ENCODE measurements at regions of chr17 and their contacts with region 1.

Region 1: DNA sequence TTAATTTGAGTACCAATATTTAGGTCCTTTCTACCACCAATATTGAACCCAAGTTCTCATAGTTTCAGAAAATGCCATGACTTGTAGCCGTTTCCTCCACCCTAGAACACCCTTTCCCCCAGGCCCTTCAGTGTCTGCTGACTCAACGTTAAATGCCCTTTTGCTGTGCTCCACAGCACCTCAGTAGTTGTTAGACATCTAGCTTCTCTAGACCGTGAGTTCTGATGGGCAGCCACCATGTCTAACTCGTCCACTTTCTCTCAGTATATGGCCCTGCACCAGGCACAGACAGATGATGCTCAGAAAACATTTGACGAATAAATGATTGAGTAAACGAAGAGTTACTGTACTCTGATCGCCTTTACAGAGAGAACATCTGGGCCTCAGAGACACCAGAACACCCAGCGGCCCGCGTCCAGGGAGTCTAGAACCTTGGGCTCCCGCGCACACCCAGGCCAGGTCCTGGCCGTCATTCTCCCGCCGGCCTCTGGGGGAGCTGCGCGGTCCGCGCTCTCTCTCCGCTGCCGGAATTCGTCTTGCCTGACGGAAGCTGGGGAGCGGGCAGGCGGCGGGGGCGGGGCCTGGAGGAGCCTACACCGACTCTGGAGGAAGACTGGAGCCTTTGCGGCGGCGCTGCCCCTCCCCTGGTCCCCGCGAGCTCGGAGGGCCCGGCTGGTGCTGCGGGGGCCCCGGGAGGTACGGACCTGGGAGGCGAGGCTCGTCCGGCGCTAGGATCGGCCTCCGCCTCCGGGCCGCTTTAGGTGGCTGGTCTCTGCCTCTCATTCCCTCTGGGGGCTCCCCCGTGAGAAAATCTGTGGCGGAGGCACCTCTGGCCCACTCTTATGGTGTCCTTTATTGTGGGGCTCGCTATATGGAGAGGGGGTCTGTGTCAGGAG is at the start of gene NKIRAS2:
- DNase-seq: peak; percentile 91 to 93
- ATAC-seq: peak; percentile 59 to 66
- H3K4me3 ChIP-seq: peak within 1 kb of the TSS; percentile 77 to 99 (median 96)
- H3K27ac ChIP-seq: peak within 1 kb of the TSS; percentile 90 to 96 (median 94)
- H3K4me1 ChIP-seq: peaks cover 50 to 51% of the 10 kb centered on the region in 2 donors
- H3K27me3 ChIP-seq: no peaks in the 10 kb centered on the region
- CTCF ChIP-seq: peak; percentile 91 to 98 (median 96)
- POLR2A ChIP-seq: peak; percentile 58 to 66
- total RNA-seq, gene NKIRAS2: 48.8 to 77.0 (median 63.4) TPM

Region 2: DNA sequence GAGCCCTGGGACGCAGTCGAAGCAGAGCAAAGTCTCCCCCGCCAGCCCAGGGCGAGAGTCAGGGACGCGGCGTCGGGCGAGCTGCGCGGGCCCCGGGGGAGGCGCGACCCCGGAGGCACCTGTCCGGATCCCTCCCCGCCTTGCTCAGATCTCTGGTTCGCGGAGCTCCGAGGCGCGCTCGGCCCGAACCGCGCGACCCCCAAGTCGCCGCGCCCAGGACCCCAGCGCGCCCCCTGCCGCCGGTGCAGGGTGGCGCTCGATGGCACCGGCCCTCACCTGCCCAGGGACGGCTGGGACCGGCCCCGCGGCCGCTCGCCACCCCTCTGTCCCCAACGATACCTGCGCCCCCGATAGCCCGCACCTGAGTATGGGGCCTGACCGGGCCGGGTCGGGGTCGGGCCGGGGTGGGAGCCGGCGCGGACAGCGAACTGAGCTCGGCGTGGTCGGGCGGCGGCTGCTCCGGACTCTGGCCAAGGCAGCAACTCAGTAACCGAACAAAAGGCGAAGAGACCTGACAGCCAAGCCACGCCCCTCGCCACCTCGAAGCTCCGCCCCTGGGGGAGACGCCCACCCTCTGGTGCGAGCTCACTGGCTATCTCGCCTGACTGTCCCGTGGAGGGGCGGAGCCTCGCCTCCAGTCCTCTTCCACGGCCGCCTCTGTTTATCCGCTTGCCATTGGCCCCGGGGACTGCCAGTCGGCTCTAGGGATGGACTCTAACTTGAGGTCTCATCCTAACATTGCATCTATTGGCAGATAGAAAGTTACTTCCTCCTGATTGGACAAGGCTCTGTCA is 233.3 kb before region 1 on chr17 and contains the start of gene JUP:
- in situ Hi-C with region 1: no loop called
- intact Hi-C with region 1: loop called (anchors 5 kb)
- DNase-seq: peak; percentile 99 to 100
- ATAC-seq: peak; percentile 86 to 88
- H3K4me3 ChIP-seq: peak within 1 kb of the TSS; percentile 72 to 83 (median 78)
- H3K27ac ChIP-seq: peak within 1 kb of the TSS; percentile 81 to 95 (median 92)
- H3K4me1 ChIP-seq: peaks cover 41 to 47% of the 10 kb centered on the region in 2 donors
- H3K27me3 ChIP-seq: no peaks in the 10 kb centered on the region
- CTCF ChIP-seq: peak; percentile 65 to 96 (median 94)
- POLR2A ChIP-seq: peak; percentile 99
- total RNA-seq, gene JUP: 88.8 to 135 (median 113) TPM

Region 3: GRCh38 chr17:42050393-42051012 is 30.7 kb after region 1 on chr17 and contains the start of gene C17orf113:
- in situ Hi-C with region 1: no loop called
- intact Hi-C with region 1: loop called (anchors 2 kb)
- DNase-seq: peak; percentile 10 to 41
- ATAC-seq: peak; percentile 74
- H3K4me3 ChIP-seq: peak within 1 kb of the TSS; percentile 59 to 86 (median 70)
- H3K27ac ChIP-seq: peak within 1 kb of the TSS; percentile 12 to 47 (median 35)
- H3K4me1 ChIP-seq: peaks cover 0 to 3% of the 10 kb centered on the region in 2 donors
- H3K27me3 ChIP-seq: peaks cover 0 to 4% (median 0%) of the 10 kb centered on the region in 3 donors
- CTCF ChIP-seq: peak in 1 of 5 experiments; percentile 49
- POLR2A ChIP-seq: no peak
- total RNA-seq, gene C17orf113: 0.13 to 0.86 (median 0.38) TPM

Region 4: GRCh38 chr17:42061646-42062487 is 42.1 kb after region 1 on chr17:
- in situ Hi-C with region 1: no loop called
- intact Hi-C with region 1: loop called (anchors 2 kb)
- DNase-seq: no peak
- ATAC-seq: no peak
- H3K4me3 ChIP-seq: no peak overlapping the region
- H3K27ac ChIP-seq: no peak overlapping the region
- H3K4me1 ChIP-seq: peaks cover 13 to 15% of the 10 kb centered on the region in 2 donors
- H3K27me3 ChIP-seq: no peaks in the 10 kb centered on the region
- CTCF ChIP-seq: no peak
- POLR2A ChIP-seq: no peak

Region 5: GRCh38 chr17:42112552-42113176 is 92.9 kb after region 1 on chr17 and contains the start of gene DHX58:
- in situ Hi-C with region 1: loop called in 3 of 4 experiments (anchors 10 kb)
- intact Hi-C with region 1: no loop called
- DNase-seq: peak; percentile 59 to 70
- ATAC-seq: peak; percentile 86 to 87
- H3K4me3 ChIP-seq: peak within 1 kb of the TSS; percentile 52 to 66 (median 64)
- H3K27ac ChIP-seq: peak within 1 kb of the TSS; percentile 85 to 93 (median 87)
- H3K4me1 ChIP-seq: peaks cover 16% of the 10 kb centered on the region in 2 donors
- H3K27me3 ChIP-seq: no peaks in the 10 kb centered on the region
- CTCF ChIP-seq: no peak
- POLR2A ChIP-seq: peak; percentile 24 to 35
- total RNA-seq, gene DHX58: 1.1 to 4.4 (median 3.1) TPM

Region 6: GRCh38 chr17:42294469-42295398 is 275.0 kb after region 1 on chr17:
- in situ Hi-C with region 1: no loop called
- intact Hi-C with region 1: no loop called
- DNase-seq: no peak
- ATAC-seq: no peak
- H3K4me3 ChIP-seq: no peak overlapping the region
- H3K27ac ChIP-seq: no peak overlapping the region
- H3K4me1 ChIP-seq: no peaks in the 10 kb centered on the region
- H3K27me3 ChIP-seq: no peaks in the 10 kb centered on the region
- CTCF ChIP-seq: no peak
- POLR2A ChIP-seq: no peak